AG04450 (cell line): ENCODE measurements at regions of chr12 and their contacts with region 1.

Region 1: GRCh38 chr12:109858764-109859163 is 21.6 kb downstream of the GLTP start:
- DNase-seq: no peak
- H3K4me3 ChIP-seq: no peak overlapping the region
- H3K27ac ChIP-seq: peak overlapping the region; percentile 21
- H3K27me3 ChIP-seq: no peaks in the 10 kb centered on the region
- CTCF ChIP-seq: no peak

Region 2: DNA sequence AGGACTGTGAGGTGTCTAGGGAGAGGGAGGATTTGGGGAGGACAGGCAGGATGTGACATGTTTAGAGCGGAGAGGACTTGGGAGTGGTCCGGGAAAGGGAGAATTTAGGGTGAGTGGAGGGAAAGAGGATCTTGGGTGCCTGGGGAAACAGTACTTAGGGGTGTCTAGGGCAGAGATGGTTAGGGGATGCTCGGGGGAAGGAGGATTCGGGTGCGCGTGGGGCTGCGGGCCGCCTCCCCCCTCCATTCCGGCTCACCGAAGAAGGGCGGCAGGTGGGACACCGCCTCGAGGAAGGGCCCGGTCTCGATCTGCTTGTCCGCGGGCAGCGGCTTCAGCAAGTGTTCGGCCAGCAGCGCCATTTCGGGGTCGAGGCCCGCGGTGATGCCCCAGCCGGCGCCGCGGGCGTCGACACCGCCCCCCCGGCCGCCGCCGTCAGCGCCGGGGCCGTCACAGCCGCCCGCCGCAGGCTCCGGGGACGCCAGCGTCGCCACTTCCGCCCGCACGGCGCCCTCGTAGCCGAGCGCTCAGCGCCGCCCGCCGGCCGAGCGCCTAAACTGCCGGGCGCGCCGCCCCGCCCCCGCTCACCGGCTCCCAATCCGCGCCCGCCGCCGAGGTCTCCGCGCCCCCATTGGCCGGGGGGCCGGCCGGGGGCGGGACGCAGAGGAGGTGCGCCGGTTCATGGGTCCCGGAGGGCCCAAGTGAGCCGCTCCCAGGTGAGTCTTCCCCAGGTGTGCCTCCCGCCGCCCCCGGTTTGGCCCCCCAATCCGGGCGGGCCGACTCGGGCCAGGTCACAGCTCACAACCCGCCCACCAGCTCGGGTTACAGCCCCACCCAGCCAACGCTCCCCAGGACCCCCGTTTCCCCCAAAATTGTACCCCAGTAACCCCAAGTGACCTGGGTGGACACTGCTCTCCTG is 21.5 kb after region 1 on chr12 and contains the start of gene GLTP:
- CTCF ChIA-PET with region 1: interaction called, 11 read pairs
- POLR2A ChIA-PET with region 1: no interaction called
- DNase-seq: no peak
- H3K4me3 ChIP-seq: peak within 1 kb of the TSS; percentile 89
- H3K27ac ChIP-seq: peak within 1 kb of the TSS; percentile 11
- H3K27me3 ChIP-seq: no peaks in the 10 kb centered on the region
- CTCF ChIP-seq: 0 out of 2 replicates have a peak, but pooled peaks have one; percentile 19
- polyA plus RNA-seq, gene GLTP: 28.8 and 30.3 TPM in 2 replicates

Region 3: GRCh38 chr12:109927622-109928021 is 68.9 kb after region 1 on chr12:
- CTCF ChIA-PET with region 1: interaction called, 20 read pairs
- POLR2A ChIA-PET with region 1: no interaction called
- DNase-seq: no peak
- H3K4me3 ChIP-seq: no peak overlapping the region
- H3K27ac ChIP-seq: no peak overlapping the region
- H3K27me3 ChIP-seq: no peaks in the 10 kb centered on the region
- CTCF ChIP-seq: peak; percentile 69

Region 4: DNA sequence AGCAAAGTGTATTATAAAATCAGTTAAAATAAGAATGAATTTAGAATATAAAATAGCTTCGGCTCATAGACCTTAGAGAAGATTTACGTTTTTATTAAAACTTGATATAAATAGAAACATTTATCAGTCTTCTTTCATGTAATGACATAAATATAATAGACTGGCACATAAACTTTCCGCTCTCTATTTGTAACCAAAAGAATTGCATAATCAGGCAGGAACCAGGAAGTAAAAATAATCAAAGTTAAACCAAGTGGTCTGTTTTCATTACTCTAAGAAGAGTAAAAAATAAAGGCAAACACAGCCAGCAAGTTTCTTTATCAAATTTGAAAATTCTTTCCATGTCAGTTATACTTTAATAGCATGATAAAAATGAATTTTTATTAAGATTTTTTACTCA is 376.0 kb after region 1 on chr12:
- CTCF ChIA-PET with region 1: no interaction called
- POLR2A ChIA-PET with region 1: no interaction called
- DNase-seq: no peak
- H3K4me3 ChIP-seq: no peak overlapping the region
- H3K27ac ChIP-seq: no peak overlapping the region
- H3K27me3 ChIP-seq: no peaks in the 10 kb centered on the region
- CTCF ChIP-seq: no peak